Aorta (tissue), 5 donors: ENCODE measurements at regions of chr19 and their contacts with region 1.

Region 1: GRCh38 chr19:48835734-48836088 is 580 bp downstream of the HSD17B14 start:
- DNase-seq: peak; percentile 96 to 98
- ATAC-seq: peak; percentile 92
- H3K4me3 ChIP-seq: peak overlapping the region; percentile 10 to 27
- H3K27ac ChIP-seq: peak overlapping the region in 1 of 2 donors; percentile 60
- H3K4me1 ChIP-seq: peaks cover 0 to 3% of the 10 kb centered on the region in 2 donors
- H3K27me3 ChIP-seq: no peaks in the 10 kb centered on the region

Region 2: GRCh38 chr19:48618916-48619691 is 216.6 kb before region 1 on chr19 and contains the starts of genes RPL18 and SPHK2:
- intact Hi-C with region 1: no loop called
- DNase-seq: peak; percentile 99
- ATAC-seq: peak; percentile 95
- H3K4me3 ChIP-seq: peak within 1 kb of the TSS; percentile 81 to 87
- H3K27ac ChIP-seq: peak within 1 kb of the TSS; percentile 50 to 92
- H3K4me1 ChIP-seq: no peaks in the 10 kb centered on the region
- H3K27me3 ChIP-seq: no peaks in the 10 kb centered on the region
- total RNA-seq, gene RPL18: 900 to 909 TPM
- total RNA-seq, gene SPHK2: 14.6 to 17.9 TPM

Region 3: DNA sequence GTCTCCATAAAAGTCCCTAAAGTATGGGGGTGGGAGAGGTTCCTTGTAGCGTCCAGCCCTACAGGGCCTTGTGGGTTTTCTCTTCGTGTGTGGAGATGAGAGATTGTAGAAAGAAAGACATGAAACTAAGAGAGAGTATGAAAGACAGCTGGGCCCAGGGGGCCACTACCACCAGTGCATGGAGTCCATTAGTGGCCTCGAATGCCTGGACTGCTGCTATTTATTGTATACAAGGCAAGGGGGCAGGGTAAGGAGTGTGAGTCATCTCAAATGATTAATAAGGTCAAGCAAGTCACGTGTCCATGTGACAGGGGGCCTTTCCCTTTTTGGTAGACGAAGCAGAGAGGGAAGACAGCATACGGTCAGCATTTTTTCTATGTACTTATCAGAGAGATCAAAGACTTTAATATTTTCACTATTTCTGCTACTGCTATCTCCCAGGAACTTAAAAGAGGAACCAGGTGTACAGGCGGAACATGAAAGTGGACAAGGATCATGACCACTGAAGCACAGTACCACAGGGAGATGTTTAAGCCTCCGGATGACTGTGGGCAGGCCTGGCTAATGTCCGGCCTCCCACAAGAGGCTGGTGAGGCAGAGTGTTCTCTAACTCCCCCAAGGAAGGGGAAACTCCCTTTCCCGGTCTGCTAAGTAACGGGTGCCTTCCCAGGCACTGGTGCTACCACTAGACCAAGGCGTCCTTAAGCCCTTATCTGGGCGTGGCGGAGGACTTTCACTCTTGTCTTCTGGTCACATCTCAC is 54.9 kb before region 1 on chr19:
- intact Hi-C with region 1: no loop called
- DNase-seq: no peak
- ATAC-seq: no peak
- H3K4me3 ChIP-seq: no peak overlapping the region
- H3K27ac ChIP-seq: no peak overlapping the region
- H3K4me1 ChIP-seq: no peaks in the 10 kb centered on the region
- H3K27me3 ChIP-seq: no peaks in the 10 kb centered on the region

Region 4: DNA sequence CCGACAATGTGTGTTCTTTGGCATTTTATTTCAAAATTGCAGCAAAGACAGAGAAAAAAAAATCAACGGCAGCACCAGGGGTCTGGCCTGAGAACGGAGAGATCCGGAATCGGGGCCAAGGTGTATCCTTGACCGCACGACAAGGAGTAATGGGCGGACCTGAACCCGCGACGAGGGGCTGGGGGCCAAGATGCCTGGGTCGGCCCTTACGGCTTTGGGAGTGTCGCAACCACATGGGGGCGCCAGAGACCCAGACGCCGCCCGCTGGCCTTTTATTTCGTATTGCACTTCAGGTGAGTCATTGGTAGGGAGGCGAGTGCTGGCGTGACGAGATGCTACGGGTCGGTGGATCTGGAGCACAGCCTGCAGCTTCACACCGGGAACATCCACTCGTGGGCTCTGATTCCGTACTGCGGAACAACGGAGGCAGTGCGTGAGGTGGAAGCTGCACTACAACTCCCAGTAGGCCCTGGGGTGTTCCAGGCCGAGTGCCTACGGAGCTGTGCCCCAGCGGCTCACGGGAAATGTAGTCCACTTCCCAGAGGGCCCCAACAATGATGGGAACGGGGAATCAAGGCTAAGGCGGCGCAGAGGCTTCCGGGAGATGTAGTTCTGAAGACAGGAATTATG is 40.5 kb before region 1 on chr19:
- intact Hi-C with region 1: loop called (anchors 1 kb)
- DNase-seq: peak; percentile 95 to 96
- ATAC-seq: peak; percentile 97
- H3K4me3 ChIP-seq: peak overlapping the region in 1 of 2 donors; percentile 11
- H3K27ac ChIP-seq: peak overlapping the region; percentile 46 to 52
- H3K4me1 ChIP-seq: no peaks in the 10 kb centered on the region
- H3K27me3 ChIP-seq: no peaks in the 10 kb centered on the region